Gastrocnemius medialis (tissue), 4 donors: ENCODE measurements at regions of chr11 and their contacts with region 1.

Region 1: DNA sequence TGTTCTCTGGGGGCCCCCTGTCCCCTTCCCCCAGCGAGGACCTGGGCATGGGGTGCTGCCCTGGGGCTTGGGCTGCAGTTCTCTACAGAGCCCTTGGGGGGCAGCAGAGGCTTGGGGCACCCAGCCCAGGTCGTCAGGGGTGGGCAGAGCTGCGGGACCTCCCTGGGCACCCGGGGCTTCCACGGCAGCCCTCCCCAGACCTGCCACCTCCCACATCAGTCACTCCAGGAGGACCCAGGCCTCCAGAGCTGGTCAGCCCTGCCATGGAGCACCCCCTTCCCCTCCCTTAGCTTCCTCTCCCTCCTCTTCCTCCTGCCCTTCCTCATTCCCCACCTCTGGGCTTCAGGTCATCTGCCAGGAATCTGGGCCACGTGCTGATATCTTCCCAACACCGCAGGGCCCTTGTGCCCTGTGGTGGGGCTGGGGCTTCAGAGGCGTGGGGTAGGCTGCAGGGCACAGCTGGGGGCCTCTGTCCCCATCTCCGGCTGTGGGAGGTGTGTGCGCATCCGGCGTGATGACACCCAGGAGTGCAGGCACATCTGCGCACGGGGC is 5.8 kb downstream of the TSPAN4 start:
- DNase-seq: no peak
- ATAC-seq: no peak
- H3K4me3 ChIP-seq: no peak overlapping the region
- H3K27ac ChIP-seq: no peak overlapping the region
- H3K4me1 ChIP-seq: peaks cover 29 to 32% of the 10 kb centered on the region in 2 donors
- H3K27me3 ChIP-seq: peaks cover 10 to 16% (median 11%) of the 10 kb centered on the region in 3 donors
- CTCF ChIP-seq: peak; percentile 71 to 91 (median 85)
- POLR2A ChIP-seq: no peak

Region 2: DNA sequence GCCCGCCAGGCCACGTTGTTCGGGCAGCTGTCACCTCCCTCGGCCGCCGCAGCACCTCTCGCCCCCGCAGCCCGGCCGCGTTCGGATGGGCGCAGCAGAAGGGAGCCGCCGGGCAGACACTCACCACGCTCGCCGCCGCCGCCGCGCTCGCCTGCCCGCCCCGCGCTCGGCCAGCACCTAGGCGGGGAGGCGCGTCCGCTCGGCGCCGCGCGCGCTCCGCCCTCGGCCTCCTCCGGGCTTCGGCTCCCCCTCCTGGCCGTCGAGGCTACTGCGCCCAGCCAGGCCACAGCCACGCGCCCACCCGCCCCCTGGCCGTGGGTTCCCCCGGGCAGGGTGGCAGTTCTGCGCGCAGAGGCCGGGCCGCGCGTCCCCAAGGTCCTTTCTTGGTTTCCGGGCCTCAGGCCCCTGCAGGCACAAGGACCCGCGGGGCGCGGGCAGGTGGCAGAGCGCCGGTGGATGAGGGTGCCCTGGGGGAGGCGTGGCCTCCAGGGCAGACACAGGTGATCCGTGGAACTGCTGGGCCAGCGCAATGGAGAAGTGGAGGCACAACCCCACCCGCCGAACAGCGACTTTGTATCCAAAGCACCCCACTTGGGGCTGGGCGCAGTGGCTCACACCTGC is 50.3 kb before region 1 on chr11 and contains the start of gene SLC25A22:
- in situ Hi-C with region 1: no loop called
- intact Hi-C with region 1: no loop called
- DNase-seq: peak in 1 of 2 donors; percentile 57
- ATAC-seq: peak; percentile 67 to 79
- H3K4me3 ChIP-seq: peak within 1 kb of the TSS; percentile 64 to 71 (median 68)
- H3K27ac ChIP-seq: peak within 1 kb of the TSS; percentile 57 to 69 (median 64)
- H3K4me1 ChIP-seq: peaks cover 11 to 35% of the 10 kb centered on the region in 2 donors
- H3K27me3 ChIP-seq: peaks cover 10 to 24% (median 23%) of the 10 kb centered on the region in 3 donors
- CTCF ChIP-seq: peak; percentile 73 to 97 (median 92)
- POLR2A ChIP-seq: no peak
- total RNA-seq, gene SLC25A22: 0.80 to 1.5 (median 1.0) TPM in 3 of 4 donors, not detected in the other

Region 3: DNA sequence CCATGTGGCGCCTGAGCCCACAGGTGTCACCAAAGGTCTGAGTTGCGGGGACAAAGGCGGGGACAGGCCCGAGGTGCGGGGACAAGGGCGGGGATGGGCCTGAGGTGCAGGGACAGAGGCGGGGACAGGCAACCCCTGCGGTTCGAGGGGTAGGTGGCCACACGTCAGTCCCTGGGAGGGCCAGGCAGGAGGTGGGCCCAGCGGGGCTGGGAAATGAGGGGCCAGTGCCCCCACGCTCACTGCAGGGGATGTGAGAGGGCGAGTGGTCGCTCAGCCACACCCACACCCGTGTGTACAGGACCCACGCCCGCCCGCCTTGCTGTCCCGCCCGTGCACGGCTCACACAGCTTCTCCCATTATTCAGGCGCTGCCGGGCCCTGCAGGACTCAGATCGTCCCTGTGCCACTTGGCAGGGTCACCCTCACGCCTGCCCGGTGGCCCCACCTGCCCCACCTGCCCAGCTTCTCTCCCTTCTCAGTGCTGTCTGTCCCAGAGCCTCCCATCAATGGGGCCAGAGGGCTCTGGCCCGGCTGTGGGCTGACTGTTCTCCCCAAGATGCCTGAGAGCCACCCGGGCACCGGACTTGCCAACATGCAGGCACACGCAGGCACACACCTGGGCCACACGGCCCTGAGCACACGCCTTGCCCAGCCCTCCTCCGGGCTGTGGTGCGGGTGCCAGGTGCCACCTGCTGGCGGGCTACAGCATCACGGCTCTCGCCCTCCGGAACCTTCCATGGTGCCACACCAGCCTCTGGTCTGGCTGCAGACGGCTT is 202.3 kb after region 1 on chr11:
- in situ Hi-C with region 1: no loop called
- intact Hi-C with region 1: loop called (anchors 1 kb)
- DNase-seq: peak; percentile 17 to 41
- ATAC-seq: peak; percentile 77 to 89
- H3K4me3 ChIP-seq: no peak overlapping the region
- H3K27ac ChIP-seq: no peak overlapping the region
- H3K4me1 ChIP-seq: no peaks in the 10 kb centered on the region
- H3K27me3 ChIP-seq: peaks cover 26 to 43% (median 29%) of the 10 kb centered on the region in 3 donors
- CTCF ChIP-seq: peak; percentile 80 to 90 (median 88)
- POLR2A ChIP-seq: no peak